ENCODE measurements at regions of chr14 and their contacts with region 1.

Region 1: GRCh38 chr14:58297762-58298476 is 436 bp upstream of the ARID4A start:
- DNase-seq: peak; percentile 94

Region 2: DNA sequence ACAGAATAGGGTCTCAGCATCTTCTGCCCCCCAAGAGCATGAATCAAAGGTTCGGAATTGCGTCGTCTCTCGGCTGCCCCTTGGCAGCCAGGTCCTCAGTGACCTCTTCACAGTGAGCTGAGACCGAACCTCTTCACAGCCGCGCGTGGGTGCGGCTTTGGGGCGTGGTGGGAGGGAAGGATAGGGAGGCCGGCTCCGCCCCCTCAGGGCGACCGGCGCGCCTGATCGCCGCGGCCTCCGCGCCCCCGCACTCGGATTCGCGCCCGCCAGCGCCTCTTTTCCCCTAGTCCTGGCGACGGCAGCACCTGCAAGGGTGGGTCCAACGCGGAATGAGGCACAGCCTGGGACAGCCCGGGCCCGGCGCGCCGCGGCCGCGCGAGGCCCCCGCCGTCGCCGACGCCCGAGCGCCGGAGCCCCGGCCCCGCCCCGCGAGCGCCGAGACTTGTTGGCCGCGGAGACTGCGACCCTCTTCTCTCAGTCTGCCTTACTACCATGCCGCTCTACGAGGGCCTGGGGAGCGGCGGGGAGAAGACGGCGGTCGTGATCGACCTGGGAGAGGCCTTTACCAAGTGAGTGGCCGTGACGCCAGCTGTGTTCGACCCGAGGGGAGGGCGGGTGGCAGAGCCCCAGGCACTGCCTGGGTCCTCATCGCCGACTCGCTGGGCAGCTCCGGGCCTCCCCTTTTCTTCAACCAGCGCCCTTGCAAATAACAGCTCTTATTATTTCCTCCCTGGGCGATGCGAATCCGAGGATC is 98.0 kb before region 1 on chr14 and contains the start of gene ACTR10:
- CTCF ChIA-PET with region 1: no interaction called
- POLR2A ChIA-PET with region 1: interaction called, 12 read pairs
- DNase-seq: peak; percentile 84

Region 3: GRCh38 chr14:58227096-58227819 is 70.7 kb before region 1 on chr14:
- CTCF ChIA-PET with region 1: no interaction called
- POLR2A ChIA-PET with region 1: no interaction called
- DNase-seq: no peak

Region 4: GRCh38 chr14:58272588-58273372 is 25.1 kb before region 1 on chr14:
- CTCF ChIA-PET with region 1: no interaction called
- POLR2A ChIA-PET with region 1: interaction called, 21 read pairs
- DNase-seq: peak; percentile 17

Region 5: DNA sequence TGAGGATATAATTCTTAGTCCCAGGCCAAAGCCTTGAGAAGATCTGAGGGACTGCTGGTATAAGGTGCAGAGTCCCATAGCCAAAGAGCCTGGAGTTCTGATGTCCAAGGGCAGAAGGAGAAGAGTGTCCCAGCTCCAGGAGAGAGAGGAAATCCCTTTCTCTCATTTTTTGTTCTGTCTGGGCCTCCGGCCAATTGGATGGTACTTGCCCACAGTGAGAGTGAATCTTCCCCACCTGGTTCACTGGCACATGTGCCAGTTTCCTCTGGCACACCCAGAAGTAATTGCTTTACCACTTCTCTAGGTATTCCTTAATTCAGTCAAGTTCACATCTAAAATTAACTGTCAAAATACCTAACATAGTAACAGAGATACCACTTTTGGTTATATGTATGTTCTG is 15.8 kb after region 1 on chr14:
- CTCF ChIA-PET with region 1: no interaction called
- POLR2A ChIA-PET with region 1: interaction called, 11 read pairs
- DNase-seq: no peak

Region 6: GRCh38 chr14:58341152-58341748 is 43.3 kb after region 1 on chr14:
- CTCF ChIA-PET with region 1: no interaction called
- POLR2A ChIA-PET with region 1: no interaction called
- DNase-seq: no peak

Region 7: DNA sequence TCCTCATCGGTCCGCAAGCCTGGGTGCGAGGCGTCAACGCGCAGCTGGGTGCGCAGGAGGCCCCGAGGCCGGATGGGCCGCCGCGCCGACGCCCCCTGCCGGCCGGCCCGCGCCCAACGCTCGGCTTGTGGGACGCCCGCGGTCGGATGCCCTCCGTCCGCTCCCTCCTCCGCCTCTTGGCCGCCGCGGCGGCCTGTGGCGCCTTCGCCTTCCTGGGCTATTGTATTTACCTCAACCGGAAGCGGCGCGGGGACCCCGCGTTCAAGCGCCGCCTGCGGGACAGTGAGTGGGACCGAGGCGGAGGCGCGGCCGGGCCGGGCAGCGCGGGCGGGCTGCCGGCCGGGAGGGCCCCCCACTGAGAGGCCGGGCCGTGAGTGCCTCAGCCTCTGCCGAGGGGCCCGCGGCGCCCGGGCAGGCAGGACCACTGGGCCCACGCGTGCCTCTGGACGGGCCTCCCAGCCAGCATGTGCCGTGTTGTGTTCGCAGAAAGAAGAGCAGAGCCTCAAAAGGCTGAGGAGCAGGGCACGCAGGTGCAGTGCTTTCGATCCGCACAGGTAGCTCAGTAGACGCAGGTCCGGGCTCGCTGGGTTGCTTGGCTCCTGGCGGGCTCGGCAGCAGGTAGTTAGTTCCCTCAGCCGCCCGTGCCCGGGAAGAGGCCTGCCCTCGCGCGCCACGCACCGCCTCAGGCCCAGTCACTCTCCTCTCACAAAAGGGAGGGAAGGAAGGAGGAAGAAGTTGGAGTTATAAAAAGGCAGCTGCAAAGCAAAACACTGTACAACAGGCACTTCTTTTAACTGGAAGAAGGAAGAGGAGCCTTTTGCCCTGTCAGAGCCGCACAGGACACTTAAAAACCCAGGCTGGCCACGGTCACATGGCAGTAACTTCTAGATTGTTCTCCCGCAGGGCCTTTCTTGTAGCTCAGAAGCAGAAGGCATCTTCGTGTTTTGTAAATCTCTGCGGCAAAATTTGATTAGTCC is 98.2 kb after region 1 on chr14 and contains the start of gene TOMM20L:
- CTCF ChIA-PET with region 1: no interaction called
- POLR2A ChIA-PET with region 1: interaction called, 12 read pairs
- DNase-seq: peak; percentile 89

Region 8: GRCh38 chr14:58414845-58415244 is 116.9 kb after region 1 on chr14:
- CTCF ChIA-PET with region 1: no interaction called
- POLR2A ChIA-PET with region 1: no interaction called
- DNase-seq: peak; percentile 21

Measured in HEK293T (cell line).